OCI-LY7 (cell line): ENCODE measurements at regions of chr9 and their contacts with region 1.

Region 1: GRCh38 chr9:35748858-35749514 is at the starts of genes GBA2 and RGP1:
- DNase-seq: peak; percentile 79
- H3K4me3 ChIP-seq: peak within 1 kb of the TSS; percentile 89
- H3K27ac ChIP-seq: peak within 1 kb of the TSS; percentile 51
- H3K4me1 ChIP-seq: peaks cover 51% of the 10 kb centered on the region
- CTCF ChIP-seq: no peak
- total RNA-seq, gene GBA2: 66.0 and 75.4 TPM in 2 replicates
- total RNA-seq, gene RGP1: 12.3 and 13.5 TPM in 2 replicates

Region 2: DNA sequence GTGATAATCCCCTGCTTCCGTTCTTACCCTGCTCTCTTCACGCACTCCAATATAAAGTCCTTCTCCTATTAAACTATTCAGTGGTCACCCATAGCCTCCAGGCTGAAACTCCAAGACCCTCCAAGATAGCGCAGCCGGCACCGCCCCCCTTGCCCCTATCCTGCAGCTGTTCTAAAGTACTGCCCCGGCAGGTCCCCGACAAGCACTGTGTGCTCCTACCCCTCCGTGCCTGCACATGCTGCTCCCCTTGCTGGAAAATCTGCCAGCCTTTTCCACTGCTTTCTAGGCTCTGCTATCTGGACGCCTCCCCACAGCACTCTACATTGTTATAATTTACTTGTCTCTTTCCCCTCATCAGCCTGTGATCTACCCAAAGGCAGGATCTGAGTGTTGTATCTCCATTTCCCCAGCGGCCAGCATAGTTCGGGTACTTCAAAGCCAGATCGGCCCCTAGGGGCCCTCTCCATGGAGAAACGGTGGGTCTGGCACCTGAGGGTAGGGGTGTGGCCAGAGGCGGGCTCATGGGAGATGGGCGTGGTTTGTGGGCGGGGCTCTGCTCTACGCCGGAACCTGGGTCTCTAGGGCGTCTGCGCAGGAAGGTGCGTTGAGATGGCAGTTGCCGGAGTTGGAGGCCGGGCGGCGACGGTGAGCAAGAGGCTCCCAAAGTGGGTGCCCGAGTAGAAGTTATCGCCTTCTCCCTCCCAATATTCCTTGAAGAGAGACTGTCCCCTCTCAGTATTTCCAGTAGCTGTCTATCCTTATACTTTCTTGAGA is 342.6 kb before region 1 on chr9:
- CTCF ChIA-PET with region 1: no interaction called
- POLR2A ChIA-PET with region 1: no interaction called
- intact Hi-C with region 1: no loop called
- DNase-seq: no peak
- H3K4me3 ChIP-seq: no peak overlapping the region
- H3K27ac ChIP-seq: no peak overlapping the region
- H3K4me1 ChIP-seq: no peaks in the 10 kb centered on the region
- CTCF ChIP-seq: no peak

Region 3: GRCh38 chr9:35664531-35665470 is 84.2 kb before region 1 on chr9 and contains the start of gene ARHGEF39:
- CTCF ChIA-PET with region 1: interaction called, 3 read pairs
- POLR2A ChIA-PET with region 1: interaction called, 11 read pairs
- intact Hi-C with region 1: no loop called
- DNase-seq: peak; percentile 88
- H3K4me3 ChIP-seq: peak within 1 kb of the TSS; percentile 78
- H3K27ac ChIP-seq: peak within 1 kb of the TSS; percentile 85
- H3K4me1 ChIP-seq: peaks cover 62% of the 10 kb centered on the region
- CTCF ChIP-seq: peak; percentile 67
- total RNA-seq, gene ARHGEF39: 22.7 and 30.8 TPM in 2 replicates

Region 4: DNA sequence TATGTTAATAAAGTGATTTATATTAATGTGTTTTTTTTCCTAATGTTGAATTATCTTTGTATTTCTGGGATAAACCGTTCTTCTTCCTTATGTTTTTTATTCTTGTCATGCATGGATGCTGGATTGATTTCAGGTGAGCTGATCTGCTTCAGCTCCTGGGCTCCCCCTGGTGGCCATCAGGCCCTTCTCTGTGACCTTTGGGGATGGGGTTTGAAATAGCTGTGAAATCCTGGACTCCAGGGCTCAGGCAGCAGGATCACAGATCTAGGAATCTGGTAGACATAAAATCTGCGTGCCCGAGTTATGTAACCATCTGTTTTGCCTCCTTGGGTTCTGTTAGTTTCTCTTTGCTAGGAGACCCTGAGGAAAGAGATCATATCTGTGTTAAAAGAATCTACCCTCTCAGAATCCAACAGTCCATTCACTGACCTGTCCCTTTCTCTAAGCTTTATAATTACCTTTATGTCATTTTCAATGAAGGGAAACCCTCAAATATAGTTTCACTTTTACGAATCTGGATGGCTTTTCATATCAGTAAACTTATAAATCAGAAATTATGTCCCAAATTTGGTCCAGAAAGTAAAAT is 133.4 kb after region 1 on chr9:
- CTCF ChIA-PET with region 1: no interaction called
- POLR2A ChIA-PET with region 1: no interaction called
- intact Hi-C with region 1: no loop called
- DNase-seq: peak; percentile 76
- H3K4me3 ChIP-seq: no peak overlapping the region
- H3K27ac ChIP-seq: no peak overlapping the region
- H3K4me1 ChIP-seq: no peaks in the 10 kb centered on the region
- CTCF ChIP-seq: peak; percentile 100